PC-9 (cell line): ENCODE measurements at regions of chr13 and their contacts with region 1.

Region 1: GRCh38 chr13:29595380-29596063 is at the start of gene SLC7A1:
- DNase-seq: peak; percentile 70 to 84
- H3K4me3 ChIP-seq: peak within 1 kb of the TSS; percentile 92
- H3K27ac ChIP-seq: peak within 1 kb of the TSS; percentile 87
- H3K4me1 ChIP-seq: peaks cover 19% of the 10 kb centered on the region
- H3K27me3 ChIP-seq: no peaks in the 10 kb centered on the region
- CTCF ChIP-seq: no peak
- total RNA-seq, gene SLC7A1: 55.4 and 62.8 TPM in 2 replicates

Region 2: DNA sequence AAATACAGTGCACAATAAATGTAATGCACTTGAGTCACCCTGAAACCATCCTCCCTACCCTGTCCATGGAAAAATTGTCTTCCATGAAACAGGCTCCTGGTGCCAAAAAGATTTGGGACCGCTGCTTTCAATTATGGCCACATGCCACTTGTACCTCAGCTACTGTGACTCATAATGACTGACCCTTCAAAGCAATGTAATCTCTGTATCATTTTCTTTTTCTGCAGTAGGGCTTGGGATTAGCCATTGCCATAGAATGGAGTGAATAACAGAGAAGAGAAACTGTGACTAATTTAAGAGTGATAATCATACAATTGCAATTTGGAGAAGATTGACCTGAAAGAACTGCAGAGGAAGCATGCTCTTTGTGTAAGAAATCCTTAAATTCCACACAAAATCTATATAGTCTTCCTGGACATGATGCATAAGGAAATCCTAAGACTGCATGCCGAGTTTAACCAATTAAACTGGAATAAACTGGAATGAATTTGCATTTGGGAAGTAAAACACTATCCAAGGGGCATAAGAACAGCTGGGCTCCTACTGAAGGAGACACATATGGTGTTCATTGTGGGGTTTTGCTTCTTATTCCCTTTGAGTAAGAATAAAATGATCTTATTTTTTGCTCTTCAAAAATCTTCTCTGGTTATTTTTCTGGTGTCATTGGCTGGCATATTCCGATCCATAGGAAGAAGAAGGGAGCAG is 59.5 kb after region 1 on chr13:
- CTCF ChIA-PET with region 1: no interaction called
- POLR2A ChIA-PET with region 1: no interaction called
- intact Hi-C with region 1: no loop called
- DNase-seq: no peak
- H3K4me3 ChIP-seq: no peak overlapping the region
- H3K27ac ChIP-seq: no peak overlapping the region
- H3K4me1 ChIP-seq: no peaks in the 10 kb centered on the region
- H3K27me3 ChIP-seq: no peaks in the 10 kb centered on the region
- CTCF ChIP-seq: no peak

Region 3: DNA sequence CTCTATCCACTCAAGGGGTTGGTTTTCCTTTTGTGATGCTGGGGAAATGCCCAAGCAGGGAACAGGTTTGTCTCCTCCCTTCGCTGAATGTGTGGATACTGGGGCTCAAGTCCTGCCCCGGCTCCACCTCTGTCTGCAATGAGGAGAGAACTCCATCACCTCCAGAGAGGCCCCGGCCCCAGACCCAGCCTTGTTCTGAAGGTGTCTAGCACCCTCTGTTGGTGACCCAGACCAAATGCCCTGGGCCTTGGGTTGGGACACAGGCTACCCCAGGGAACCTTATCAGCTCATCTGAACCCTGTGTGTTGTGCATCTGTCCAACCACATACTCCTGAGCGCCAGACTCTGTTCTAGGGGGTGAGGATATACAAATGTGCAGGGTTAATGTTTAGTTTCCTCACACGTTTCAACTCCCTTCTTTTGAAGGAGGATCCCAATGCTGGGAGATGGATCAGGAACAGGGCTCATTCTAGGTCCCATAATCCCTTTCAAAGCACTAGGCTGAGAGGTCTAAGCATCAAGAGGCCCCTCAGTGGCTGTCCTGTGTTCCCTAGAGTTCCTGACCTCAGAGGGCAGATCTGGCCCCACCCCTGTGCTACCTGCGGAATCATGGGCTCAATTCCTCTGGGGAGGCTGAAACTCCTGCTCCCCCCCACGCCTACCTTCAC is 112.5 kb after region 1 on chr13:
- CTCF ChIA-PET with region 1: no interaction called
- POLR2A ChIA-PET with region 1: interaction called, 5 read pairs
- intact Hi-C with region 1: loop called (anchors 10 kb)
- DNase-seq: peak in 1 of 2 experiments; percentile 17
- H3K4me3 ChIP-seq: no peak overlapping the region
- H3K27ac ChIP-seq: no peak overlapping the region
- H3K4me1 ChIP-seq: peaks cover 7% of the 10 kb centered on the region
- H3K27me3 ChIP-seq: no peaks in the 10 kb centered on the region
- CTCF ChIP-seq: peak; percentile 72